GM10248 (cell line): ENCODE measurements at regions of chr1 and their contacts with region 1.

Region 1: GRCh38 chr1:66374561-66375111 is 159.3 kb upstream of the SGIP1 start:
- DNase-seq: peak; percentile 47
- CTCF ChIP-seq: no peak

Region 2: DNA sequence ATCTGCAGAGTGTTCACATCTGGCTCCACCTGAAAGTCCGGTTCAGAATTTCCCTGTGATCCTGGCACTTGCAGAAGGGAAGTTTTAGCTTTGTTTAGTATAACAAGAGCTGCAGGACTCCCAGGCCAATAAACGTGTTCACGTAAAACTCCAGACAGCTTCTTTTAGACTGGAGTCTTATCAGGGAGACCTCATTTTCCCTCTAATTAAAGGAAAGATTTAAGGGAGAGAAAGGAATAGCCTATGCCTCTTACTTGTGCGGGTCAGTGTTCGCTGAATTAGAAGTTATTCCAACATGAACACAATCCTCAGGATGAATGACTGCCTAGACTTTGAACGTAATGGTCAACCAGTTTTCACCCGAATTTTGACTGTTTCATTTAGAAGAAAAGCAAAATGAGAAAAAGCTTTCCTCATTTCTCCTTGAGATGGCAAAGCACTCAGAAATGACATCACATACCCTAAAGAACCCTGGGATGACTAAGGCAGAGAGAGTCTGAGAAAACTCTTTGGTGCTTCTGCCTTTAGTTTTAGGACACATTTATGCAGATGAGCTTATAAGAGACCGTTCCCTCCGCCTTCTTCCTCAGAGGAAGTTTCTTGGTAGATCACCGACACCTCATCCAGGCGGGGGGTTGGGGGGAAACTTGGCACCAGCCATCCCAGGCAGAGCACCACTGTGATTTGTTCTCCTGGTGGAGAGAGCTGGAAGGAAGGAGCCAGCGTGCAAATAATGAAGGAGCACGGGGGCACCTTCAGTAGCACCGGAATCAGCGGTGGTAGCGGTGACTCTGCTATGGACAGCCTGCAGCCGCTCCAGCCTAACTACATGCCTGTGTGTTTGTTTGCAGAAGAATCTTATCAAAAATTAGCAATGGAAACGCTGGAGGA is 42.7 kb before region 1 on chr1:
- CTCF ChIA-PET with region 1: interaction called, 12 read pairs
- POLR2A ChIA-PET with region 1: no interaction called
- DNase-seq: no peak
- CTCF ChIP-seq: no peak

Region 3: DNA sequence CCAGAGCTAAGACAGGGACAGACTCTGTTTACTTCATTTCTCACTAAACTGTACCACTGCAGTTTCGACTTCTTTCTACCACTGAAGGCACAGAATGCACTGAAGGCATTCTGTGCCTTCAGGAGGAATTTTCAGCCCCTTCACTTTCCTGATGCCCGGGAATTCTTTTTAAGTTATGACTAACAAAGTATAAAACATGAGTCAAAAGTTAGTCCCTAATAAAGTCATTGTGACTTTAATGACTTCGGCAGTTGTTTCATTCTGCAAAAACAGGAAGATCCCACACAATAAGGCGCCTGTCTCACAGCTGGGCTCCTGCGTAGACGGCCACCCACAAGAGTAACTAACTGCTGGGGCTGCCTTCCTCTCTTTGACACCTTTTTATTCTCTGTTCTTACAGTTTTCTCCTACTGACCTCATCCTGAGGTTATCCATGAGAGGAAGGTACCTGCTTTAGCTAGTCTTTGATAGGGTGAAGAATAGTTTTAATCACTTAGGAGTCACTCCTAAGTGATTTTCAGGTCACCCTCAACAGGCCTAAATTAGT is 24.6 kb before region 1 on chr1:
- CTCF ChIA-PET with region 1: interaction called, 23 read pairs
- POLR2A ChIA-PET with region 1: no interaction called
- DNase-seq: no peak
- CTCF ChIP-seq: no peak

Region 4: GRCh38 chr1:66360285-66360724 is 14.3 kb before region 1 on chr1:
- CTCF ChIA-PET with region 1: interaction called, 23 read pairs
- POLR2A ChIA-PET with region 1: interaction called, 3 read pairs
- DNase-seq: no peak
- CTCF ChIP-seq: peak; percentile 36

Region 5: DNA sequence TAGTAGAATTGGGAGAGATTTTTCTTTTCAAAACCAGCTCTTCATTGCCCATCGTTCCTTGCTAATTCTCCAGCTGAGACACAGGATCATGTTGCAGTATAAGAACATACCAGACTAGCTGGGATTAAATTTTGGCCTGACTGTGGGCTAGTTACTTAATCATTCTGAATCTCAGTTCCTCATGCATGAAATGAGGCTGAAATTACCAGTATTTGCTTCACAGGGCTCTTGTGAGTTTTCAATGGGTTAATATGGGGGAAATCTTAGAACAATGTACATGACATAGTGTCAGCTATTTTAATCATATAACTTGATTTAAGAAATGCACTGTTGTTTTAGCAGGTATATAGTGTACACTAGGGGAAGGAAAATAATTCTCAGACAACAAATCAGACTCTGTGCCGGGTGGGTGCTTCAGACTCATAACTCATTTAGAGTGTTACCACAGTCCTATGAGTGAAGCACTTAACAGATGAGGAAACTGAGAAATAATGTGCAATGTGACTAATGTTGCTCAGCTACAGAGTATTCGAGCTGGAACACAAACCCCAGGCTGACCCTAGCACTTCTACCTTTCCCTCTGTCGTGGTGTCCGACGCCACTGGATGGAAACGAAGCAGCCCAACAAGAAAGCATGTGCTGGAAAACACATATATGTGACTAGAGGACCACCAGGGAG is 21.7 kb after region 1 on chr1:
- CTCF ChIA-PET with region 1: interaction called, 41 read pairs
- POLR2A ChIA-PET with region 1: no interaction called
- DNase-seq: peak; percentile 30
- CTCF ChIP-seq: no peak

Region 6: DNA sequence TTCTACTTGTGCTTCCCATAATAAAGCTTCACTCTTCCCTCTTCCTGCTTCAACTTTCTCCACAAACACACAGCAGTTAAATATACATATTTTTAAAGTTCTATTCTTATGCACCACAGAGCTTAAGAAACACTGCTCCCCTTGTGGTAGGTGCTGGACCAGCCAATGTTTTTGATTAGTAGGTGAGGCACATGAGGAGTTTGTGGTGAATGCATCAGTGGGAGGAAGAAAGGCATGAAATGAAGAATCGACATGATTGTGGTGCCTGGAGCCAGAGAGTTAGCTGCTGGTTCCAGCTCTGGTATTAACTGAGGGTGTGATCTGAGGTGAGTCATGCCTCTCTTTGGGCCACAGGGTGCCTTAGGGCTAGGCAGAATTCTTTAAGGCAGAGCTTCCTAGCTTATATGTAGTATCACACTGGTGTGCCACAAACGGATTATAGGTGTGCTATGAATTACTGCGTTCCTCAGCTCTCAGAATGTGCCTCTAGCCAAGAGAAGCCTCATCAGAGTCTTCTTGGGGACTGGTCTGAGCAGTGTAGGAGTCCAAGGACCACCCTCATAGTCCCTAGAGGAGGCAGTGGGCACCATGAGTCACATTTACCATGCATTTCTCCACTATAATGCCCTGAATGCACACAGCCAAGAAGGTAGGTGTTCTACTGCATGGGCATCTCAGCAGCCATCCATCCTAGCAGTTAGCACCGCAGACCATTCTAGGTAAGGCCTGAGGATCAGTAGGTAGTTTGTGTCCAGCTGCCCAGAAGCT is 61.9 kb after region 1 on chr1:
- CTCF ChIA-PET with region 1: interaction called, 113 read pairs
- POLR2A ChIA-PET with region 1: no interaction called
- DNase-seq: peak; percentile 29
- CTCF ChIP-seq: peak; percentile 14

Region 7: GRCh38 chr1:66542811-66543767 is 168.5 kb after region 1 on chr1:
- CTCF ChIA-PET with region 1: no interaction called
- POLR2A ChIA-PET with region 1: no interaction called
- DNase-seq: no peak
- CTCF ChIP-seq: no peak